MCF 10A (cell line): ENCODE measurements at regions of chr12 and their contacts with region 1.

Region 1: DNA sequence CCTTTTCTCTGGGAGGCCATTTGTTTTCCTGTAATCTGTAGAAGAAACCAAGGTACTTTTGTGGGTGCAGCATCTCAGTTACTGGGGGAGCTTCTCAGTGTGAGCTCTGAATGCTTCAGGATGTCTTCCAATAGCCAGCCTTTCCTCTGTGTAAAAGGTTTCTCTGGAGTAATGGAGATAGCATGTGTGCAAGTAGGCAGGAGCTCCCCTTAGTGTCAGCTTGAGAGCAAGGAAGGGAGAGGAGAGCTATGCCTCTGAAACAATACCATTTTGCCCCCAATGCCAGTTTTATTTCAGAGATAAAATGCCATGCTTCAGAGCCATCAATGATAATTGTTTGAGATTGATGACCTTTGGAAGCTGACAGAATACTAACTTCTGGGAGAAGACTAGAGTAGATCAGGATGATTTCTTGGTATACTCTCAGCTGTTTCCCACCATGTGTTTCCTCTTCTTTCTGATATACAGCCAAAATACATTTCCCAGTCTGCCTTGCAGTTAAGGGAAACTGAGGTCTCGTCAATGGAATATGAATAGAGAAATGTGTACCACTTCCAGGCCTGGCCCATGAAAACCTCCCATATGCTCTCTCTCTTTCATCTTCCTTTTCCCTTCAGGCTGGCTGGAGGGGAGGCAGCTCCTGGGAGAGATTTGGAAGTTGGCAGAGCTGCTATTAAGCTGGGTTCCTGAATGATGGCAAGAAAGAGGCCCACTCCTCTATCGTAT is 125.7 kb downstream of the CRADD start:
- DNase-seq: peak; percentile 42
- H3K4me3 Mint-ChIP-seq: peak overlapping the region; percentile 25
- H3K27ac Mint-ChIP-seq: peak overlapping the region; percentile 91
- H3K4me1 Mint-ChIP-seq: peaks cover 56% of the 10 kb centered on the region
- H3K27me3 Mint-ChIP-seq: no peaks in the 10 kb centered on the region
- CTCF ChIP-seq: no peak

Region 2: GRCh38 chr12:93785262-93786010 is 17.4 kb before region 1 on chr12:
- CTCF ChIA-PET with region 1: interaction called, 5 read pairs
- POLR2A ChIA-PET with region 1: interaction called, 49 read pairs
- intact Hi-C with region 1: no loop called
- DNase-seq: peak; percentile 94
- H3K4me3 Mint-ChIP-seq: peak overlapping the region; percentile 3
- H3K27ac Mint-ChIP-seq: peak overlapping the region; percentile 80
- H3K4me1 Mint-ChIP-seq: peaks cover 29% of the 10 kb centered on the region
- H3K27me3 Mint-ChIP-seq: no peaks in the 10 kb centered on the region
- CTCF ChIP-seq: no peak

Region 3: GRCh38 chr12:93790472-93791152 is 12.2 kb before region 1 on chr12:
- CTCF ChIA-PET with region 1: interaction called, 5 read pairs
- POLR2A ChIA-PET with region 1: interaction called, 49 read pairs
- intact Hi-C with region 1: no loop called
- DNase-seq: peak; percentile 84
- H3K4me3 Mint-ChIP-seq: no peak overlapping the region
- H3K27ac Mint-ChIP-seq: peak overlapping the region; percentile 46
- H3K4me1 Mint-ChIP-seq: peaks cover 23% of the 10 kb centered on the region
- H3K27me3 Mint-ChIP-seq: no peaks in the 10 kb centered on the region
- CTCF ChIP-seq: no peak